Endothelial cell of umbilical vein (primary cell): ENCODE measurements at regions of chr19 and their contacts with region 1.

Region 1: GRCh38 chr19:35975608-35976214 is 19.3 kb upstream of the SDHAF1 start:
- DNase-seq: peak; percentile 13
- H3K4me3 ChIP-seq: no peak overlapping the region
- H3K27ac ChIP-seq: no peak overlapping the region
- H3K4me1 ChIP-seq: no peaks in the 10 kb centered on the region
- H3K27me3 ChIP-seq: no peaks in the 10 kb centered on the region
- CTCF ChIP-seq: no peak
- POLR2A ChIP-seq: no peak

Region 2: DNA sequence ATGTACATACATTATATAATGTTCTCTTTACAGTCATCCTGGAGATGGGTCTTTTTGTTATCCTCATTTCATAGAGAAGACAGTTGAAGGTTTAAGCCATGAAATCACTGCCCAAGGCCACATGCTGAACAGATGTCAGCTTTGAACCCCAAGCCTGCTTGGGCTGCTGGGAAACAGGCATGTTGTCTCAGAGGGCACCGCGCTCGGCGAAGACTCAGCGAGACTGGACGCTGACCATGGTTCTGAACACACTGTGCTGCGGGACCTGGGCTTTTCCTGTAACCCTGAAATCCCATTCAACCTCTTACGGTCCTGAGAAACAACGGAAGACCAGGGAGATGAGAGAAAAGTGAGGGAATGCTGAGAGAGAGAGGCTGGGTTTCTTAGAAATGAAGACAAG is 12.2 kb before region 1 on chr19:
- CTCF ChIA-PET with region 1: interaction called, 4 read pairs
- POLR2A ChIA-PET with region 1: no interaction called
- dilution Hi-C with region 1: no loop called
- intact Hi-C with region 1: loop called (anchors 1 kb)
- DNase-seq: peak; percentile 55
- H3K4me3 ChIP-seq: no peak overlapping the region
- H3K27ac ChIP-seq: no peak overlapping the region
- H3K4me1 ChIP-seq: no peaks in the 10 kb centered on the region
- H3K27me3 ChIP-seq: peaks cover 17 to 21% of the 10 kb centered on the region in 2 experiments
- CTCF ChIP-seq: no peak
- POLR2A ChIP-seq: no peak